ENCODE measurements at regions of chr2 and their contacts with region 1.

Region 1: GRCh38 chr2:88122141-88122884 is 5.5 kb downstream of the FABP1 start:
- DNase-seq: no peak
- ATAC-seq: peak; percentile 71
- H3K4me3 ChIP-seq: no peak overlapping the region
- H3K27ac ChIP-seq: peak overlapping the region; percentile 22
- H3K4me1 ChIP-seq: peaks cover 39% of the 10 kb centered on the region
- H3K27me3 ChIP-seq: peaks cover 0 to 4% of the 10 kb centered on the region in 2 experiments; a peak in 1 of 5 replicates
- CTCF ChIP-seq: no peak
- EP300 ChIP-seq: no peak
- POLR2A ChIP-seq: peak in 1 of 2 experiments; percentile 89; a peak in 2 of 4 replicates
- RAD21 ChIP-seq: no peak

Region 2: GRCh38 chr2:88069117-88069516 is 53.2 kb before region 1 on chr2:
- CTCF ChIA-PET with region 1: no interaction called
- POLR2A ChIA-PET with region 1: no interaction called
- in situ Hi-C with region 1: no loop called
- intact Hi-C with region 1: loop called (anchors 2 kb)
- DNase-seq: no peak
- ATAC-seq: no peak
- H3K4me3 ChIP-seq: no peak overlapping the region
- H3K27ac ChIP-seq: no peak overlapping the region
- H3K4me1 ChIP-seq: no peaks in the 10 kb centered on the region
- H3K27me3 ChIP-seq: peaks cover 2 to 3% of the 10 kb centered on the region in 2 experiments; a peak in 2 of 5 replicates
- CTCF ChIP-seq: no peak
- EP300 ChIP-seq: no peak
- POLR2A ChIP-seq: no peak
- RAD21 ChIP-seq: no peak

Region 3: GRCh38 chr2:88136817-88137216 is 14.5 kb after region 1 on chr2:
- CTCF ChIA-PET with region 1: no interaction called
- POLR2A ChIA-PET with region 1: interaction called, 122 read pairs
- in situ Hi-C with region 1: no loop called
- intact Hi-C with region 1: loop called (anchors 2 kb)
- DNase-seq: peak; percentile 83
- ATAC-seq: peak; percentile 32
- H3K4me3 ChIP-seq: no peak overlapping the region
- H3K27ac ChIP-seq: peak overlapping the region; percentile 89
- H3K4me1 ChIP-seq: peaks cover 92% of the 10 kb centered on the region
- H3K27me3 ChIP-seq: no peaks in the 10 kb centered on the region
- CTCF ChIP-seq: no peak
- EP300 ChIP-seq: peak in 1 of 2 experiments; percentile 76; a peak in 2 of 4 replicates
- POLR2A ChIP-seq: no peak
- RAD21 ChIP-seq: no peak